Activated CD4-positive, alpha-beta T cell treated with anti-CD3 and anti-CD28 coated beads, Interleukin-2, amount 10 ng/mL, durations not matched to agents 24 days and 14 days (primary cell): ENCODE measurements at regions of chr1 and their contacts with region 1.

Region 1: DNA sequence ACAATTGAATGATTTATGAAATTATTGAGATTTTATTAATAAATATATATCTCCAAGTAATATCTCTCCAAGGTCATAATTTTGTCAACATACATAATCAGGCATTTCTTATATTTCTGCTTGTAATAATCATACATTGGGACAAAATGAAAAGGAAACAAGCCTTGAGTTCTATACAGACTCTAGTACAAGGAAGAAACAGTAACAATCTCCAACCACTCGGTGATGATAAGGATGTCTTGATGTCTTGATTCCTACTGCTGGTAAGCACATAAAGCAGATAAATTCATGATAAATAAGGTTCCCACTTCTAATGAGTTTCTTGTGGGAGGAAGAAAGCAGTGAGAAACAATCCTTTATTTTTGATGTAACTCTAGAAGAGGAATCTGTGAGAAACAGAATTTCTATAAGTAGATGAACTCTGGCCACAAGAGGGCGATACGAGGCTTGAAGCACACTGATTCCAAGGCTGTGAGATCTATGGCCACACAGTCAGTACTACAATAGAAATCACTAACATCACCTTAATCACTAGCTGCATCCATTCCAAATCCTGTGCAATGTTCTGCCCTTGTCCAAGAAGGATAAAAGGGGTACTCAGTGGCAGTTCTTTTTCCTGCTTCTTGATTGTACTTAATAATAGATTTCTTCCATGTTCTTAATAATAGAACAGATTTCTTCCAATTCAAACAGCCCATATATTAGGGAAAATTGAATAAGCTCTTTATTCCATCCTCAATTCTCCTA is 41.4 kb upstream of the LRRC8B start:
- DNase-seq: peak; percentile 93
- H3K4me3 Mint-ChIP-seq: no peak overlapping the region
- H3K27ac Mint-ChIP-seq: no peak overlapping the region
- H3K4me1 Mint-ChIP-seq: peaks cover 21% of the 10 kb centered on the region
- H3K27me3 Mint-ChIP-seq: no peaks in the 10 kb centered on the region

Region 2: GRCh38 chr1:89516055-89516454 is 32.9 kb after region 1 on chr1:
- intact Hi-C with region 1: loop called (anchors 2 kb)
- DNase-seq: peak; percentile 47
- H3K4me3 Mint-ChIP-seq: no peak overlapping the region
- H3K27ac Mint-ChIP-seq: peak overlapping the region; percentile 62
- H3K4me1 Mint-ChIP-seq: peaks cover 26% of the 10 kb centered on the region
- H3K27me3 Mint-ChIP-seq: peaks cover 1% of the 10 kb centered on the region

Region 3: GRCh38 chr1:89598450-89599331 is 115.5 kb after region 1 on chr1:
- intact Hi-C with region 1: loop called (anchors 1 kb)
- DNase-seq: peak; percentile 69
- H3K4me3 Mint-ChIP-seq: no peak overlapping the region
- H3K27ac Mint-ChIP-seq: peak overlapping the region; percentile 76
- H3K4me1 Mint-ChIP-seq: peaks cover 70% of the 10 kb centered on the region
- H3K27me3 Mint-ChIP-seq: no peaks in the 10 kb centered on the region

Region 4: DNA sequence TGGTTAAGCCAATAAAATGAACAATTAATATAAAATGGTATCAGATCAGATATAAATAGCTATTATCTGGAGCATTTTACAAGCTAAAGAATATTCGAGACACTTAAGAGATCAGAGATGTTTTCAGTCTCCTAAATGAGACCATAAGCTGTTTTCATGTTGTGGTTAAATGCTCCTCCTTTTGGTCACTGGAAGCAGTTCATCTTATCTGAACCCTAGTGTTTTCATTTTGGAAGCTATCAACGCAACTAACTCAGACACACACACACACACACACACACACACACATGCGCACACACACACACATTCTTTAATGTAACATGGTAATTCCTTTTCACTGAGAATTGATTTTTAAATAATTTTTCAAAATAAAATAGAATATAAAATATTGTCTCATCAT is 139.7 kb after region 1 on chr1:
- intact Hi-C with region 1: loop called (anchors 1 kb)
- DNase-seq: peak; percentile 58
- H3K4me3 Mint-ChIP-seq: no peak overlapping the region
- H3K27ac Mint-ChIP-seq: no peak overlapping the region
- H3K4me1 Mint-ChIP-seq: peaks cover 38% of the 10 kb centered on the region
- H3K27me3 Mint-ChIP-seq: no peaks in the 10 kb centered on the region

Region 5: GRCh38 chr1:89762779-89763648 is 279.8 kb after region 1 on chr1:
- intact Hi-C with region 1: loop called (anchors 1 kb)
- DNase-seq: peak; percentile 96
- H3K4me3 Mint-ChIP-seq: peak overlapping the region; percentile 91
- H3K27ac Mint-ChIP-seq: peak overlapping the region; percentile 96
- H3K4me1 Mint-ChIP-seq: peaks cover 53% of the 10 kb centered on the region
- H3K27me3 Mint-ChIP-seq: no peaks in the 10 kb centered on the region

Region 6: DNA sequence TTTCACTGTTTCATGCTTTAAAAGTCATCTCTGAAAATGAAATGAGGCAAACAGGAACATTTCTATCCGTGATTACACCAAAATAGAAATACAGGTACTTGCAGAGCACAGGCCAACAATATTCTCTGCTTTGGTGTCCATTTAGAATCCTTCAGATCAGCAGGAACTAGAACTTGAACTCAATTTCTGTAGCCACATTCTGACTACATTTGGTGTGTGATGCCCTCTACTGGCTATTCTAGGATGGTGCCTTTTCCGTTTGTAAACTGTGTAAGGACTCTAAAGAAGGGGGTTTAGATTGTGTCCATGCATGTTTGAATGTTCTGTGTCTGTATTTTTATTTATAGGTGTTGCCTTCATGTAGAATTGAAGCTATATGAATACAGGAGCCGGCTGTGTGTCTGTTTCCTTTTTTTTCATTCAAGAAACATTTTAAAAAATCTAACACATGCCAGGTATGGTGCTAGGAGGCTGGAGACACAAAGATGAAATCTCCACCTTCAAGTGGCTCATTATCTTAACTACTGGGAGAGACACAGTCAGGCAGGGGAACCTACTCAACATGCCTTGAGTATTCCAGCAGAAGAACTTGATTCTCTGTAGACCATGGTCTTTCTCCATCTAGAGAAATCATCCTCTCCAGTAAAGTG is 504.1 kb after region 1 on chr1:
- intact Hi-C with region 1: loop called (anchors 5 kb)
- DNase-seq: peak; percentile 90
- H3K4me3 Mint-ChIP-seq: no peak overlapping the region
- H3K27ac Mint-ChIP-seq: no peak overlapping the region
- H3K4me1 Mint-ChIP-seq: peaks cover 12% of the 10 kb centered on the region
- H3K27me3 Mint-ChIP-seq: peaks cover 11% of the 10 kb centered on the region